ENCODE measurements at regions of chr11 and their contacts with region 1.

Region 1: DNA sequence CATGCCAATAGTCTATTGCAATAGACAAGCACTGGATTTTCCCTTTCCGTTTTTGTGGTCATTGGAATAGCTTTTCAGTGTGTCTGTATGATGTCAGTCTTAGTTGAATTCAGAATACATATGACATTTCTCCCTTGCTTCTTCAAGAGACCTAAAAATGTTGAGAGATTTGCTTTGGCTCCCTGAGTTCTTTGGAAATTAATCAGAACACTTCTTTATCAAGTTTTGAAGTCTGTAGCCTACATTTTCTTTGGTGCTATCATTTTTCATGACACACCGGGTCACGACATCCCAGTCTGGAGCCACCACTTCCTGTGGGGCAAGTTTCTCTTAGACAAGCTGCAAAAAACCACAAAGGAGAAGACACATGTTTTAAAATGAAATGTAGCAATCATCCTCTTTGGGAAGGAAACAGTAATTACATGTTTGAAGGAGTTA is 847.1 kb downstream of the OPCML start:
- DNase-seq: peak; percentile 73
- H3K4me3 ChIP-seq: no peak overlapping the region
- H3K27ac ChIP-seq: no peak overlapping the region
- H3K4me1 ChIP-seq: peaks cover 14% of the 10 kb centered on the region
- H3K27me3 ChIP-seq: no peaks in the 10 kb centered on the region
- CTCF ChIP-seq: no peak

Region 2: GRCh38 chr11:132644520-132645239 is 40.5 kb before region 1 on chr11:
- CTCF ChIA-PET with region 1: no interaction called
- dilution Hi-C with region 1: no loop called
- in situ Hi-C with region 1: no loop called
- intact Hi-C with region 1: no loop called
- DNase-seq: no peak
- H3K4me3 ChIP-seq: no peak overlapping the region
- H3K27ac ChIP-seq: no peak overlapping the region
- H3K4me1 ChIP-seq: peaks cover 13% of the 10 kb centered on the region
- H3K27me3 ChIP-seq: no peaks in the 10 kb centered on the region
- CTCF ChIP-seq: no peak

Region 3: GRCh38 chr11:132744771-132745170 is 59.6 kb after region 1 on chr11:
- CTCF ChIA-PET with region 1: no interaction called
- dilution Hi-C with region 1: no loop called
- in situ Hi-C with region 1: no loop called
- intact Hi-C with region 1: loop called (anchors 10 kb)
- DNase-seq: no peak
- H3K4me3 ChIP-seq: no peak overlapping the region
- H3K27ac ChIP-seq: no peak overlapping the region
- H3K4me1 ChIP-seq: peaks cover 10% of the 10 kb centered on the region
- H3K27me3 ChIP-seq: no peaks in the 10 kb centered on the region
- CTCF ChIP-seq: no peak

Region 4: GRCh38 chr11:132763503-132763902 is 78.3 kb after region 1 on chr11:
- CTCF ChIA-PET with region 1: no interaction called
- dilution Hi-C with region 1: loop called (anchors 5 kb)
- in situ Hi-C with region 1: no loop called
- intact Hi-C with region 1: no loop called
- DNase-seq: no peak
- H3K4me3 ChIP-seq: no peak overlapping the region
- H3K27ac ChIP-seq: no peak overlapping the region
- H3K4me1 ChIP-seq: no peaks in the 10 kb centered on the region
- H3K27me3 ChIP-seq: no peaks in the 10 kb centered on the region
- CTCF ChIP-seq: no peak

Region 5: GRCh38 chr11:132803436-132803835 is 118.2 kb after region 1 on chr11:
- CTCF ChIA-PET with region 1: no interaction called
- dilution Hi-C with region 1: no loop called
- in situ Hi-C with region 1: no loop called
- intact Hi-C with region 1: no loop called
- DNase-seq: peak; percentile 71
- H3K4me3 ChIP-seq: no peak overlapping the region
- H3K27ac ChIP-seq: no peak overlapping the region
- H3K4me1 ChIP-seq: peaks cover 11% of the 10 kb centered on the region
- H3K27me3 ChIP-seq: no peaks in the 10 kb centered on the region
- CTCF ChIP-seq: peak; percentile 15 to 47

Region 6: DNA sequence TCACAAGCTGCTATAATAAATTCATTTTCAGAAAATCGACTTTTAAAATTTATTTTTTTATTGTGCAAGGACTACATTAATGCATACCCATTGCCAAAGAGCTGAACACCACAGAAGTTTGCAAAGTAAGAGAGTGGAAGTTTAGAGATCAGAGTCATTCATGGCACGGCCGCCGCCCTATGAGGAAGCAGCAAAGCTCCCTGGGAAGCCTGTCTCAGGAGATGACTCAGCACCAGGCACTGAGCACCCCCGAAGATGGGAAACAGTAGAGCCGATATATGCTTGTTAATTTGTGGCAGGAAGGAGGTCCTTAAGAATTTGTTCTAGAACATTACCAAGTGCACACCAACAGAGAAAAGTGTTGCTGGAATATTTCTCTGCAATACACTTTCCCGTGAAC is 153.4 kb after region 1 on chr11:
- CTCF ChIA-PET with region 1: no interaction called
- dilution Hi-C with region 1: no loop called
- in situ Hi-C with region 1: no loop called
- intact Hi-C with region 1: no loop called
- DNase-seq: peak; percentile 19
- H3K4me3 ChIP-seq: no peak overlapping the region
- H3K27ac ChIP-seq: no peak overlapping the region
- H3K4me1 ChIP-seq: no peaks in the 10 kb centered on the region
- H3K27me3 ChIP-seq: no peaks in the 10 kb centered on the region
- CTCF ChIP-seq: no peak